Activated CD8-positive, alpha-beta T cell treated with anti-CD3 and anti-CD28 coated beads for 36 hours (primary cell): ENCODE measurements at regions of chr12 and their contacts with region 1.

Region 1: DNA sequence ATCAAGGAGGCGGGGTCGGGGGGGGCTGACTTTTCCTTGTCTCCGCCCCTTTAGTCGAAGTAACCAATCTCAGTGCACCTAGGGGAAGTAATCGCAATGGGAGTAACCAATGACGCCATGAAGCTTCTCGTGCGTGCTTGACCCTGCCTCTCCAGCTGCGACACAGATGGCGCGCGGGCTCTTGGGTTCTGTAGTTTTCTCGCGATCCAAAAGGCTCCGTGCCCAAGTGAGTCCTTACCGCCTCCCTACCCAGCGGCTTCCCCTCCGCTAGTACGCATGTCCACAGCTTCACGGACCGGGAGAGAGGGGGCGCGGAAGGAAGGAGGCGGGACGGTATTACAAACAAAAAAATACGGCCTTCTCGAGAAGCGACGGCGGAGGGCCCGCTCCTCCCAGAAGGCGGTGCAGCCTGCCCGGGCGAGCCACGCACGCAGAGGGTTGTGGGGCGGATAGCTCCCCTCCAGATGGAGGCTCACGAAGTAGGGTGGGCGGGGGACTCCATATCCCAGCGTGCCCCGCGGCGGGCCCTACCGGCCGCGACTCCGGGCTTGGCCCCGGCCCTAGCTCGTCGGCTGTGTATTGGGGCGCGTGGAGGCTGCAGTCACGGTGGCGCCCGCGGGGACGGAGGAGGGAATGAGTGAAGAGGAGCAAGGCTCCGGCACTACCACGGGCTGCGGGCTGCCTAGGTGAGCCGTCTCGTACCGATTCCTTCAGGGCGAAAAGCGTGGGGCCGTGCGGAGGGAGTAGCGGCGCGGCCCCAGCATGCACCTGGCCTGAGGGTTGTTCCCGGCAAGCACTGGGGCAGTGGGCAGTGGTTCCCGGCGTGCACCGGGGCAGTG is at the start of gene TARBP2:
- DNase-seq: peak; percentile 98
- ATAC-seq: peak; percentile 81
- H3K4me3 Mint-ChIP-seq: peak within 1 kb of the TSS; percentile 76
- H3K27ac Mint-ChIP-seq: peak within 1 kb of the TSS; percentile 94
- H3K4me1 Mint-ChIP-seq: peaks cover 39% of the 10 kb centered on the region
- H3K27me3 Mint-ChIP-seq: no peaks in the 10 kb centered on the region
- CTCF ChIP-seq: no peak
- total RNA-seq, gene TARBP2: 32.0 to 33.3 TPM

Region 2: DNA sequence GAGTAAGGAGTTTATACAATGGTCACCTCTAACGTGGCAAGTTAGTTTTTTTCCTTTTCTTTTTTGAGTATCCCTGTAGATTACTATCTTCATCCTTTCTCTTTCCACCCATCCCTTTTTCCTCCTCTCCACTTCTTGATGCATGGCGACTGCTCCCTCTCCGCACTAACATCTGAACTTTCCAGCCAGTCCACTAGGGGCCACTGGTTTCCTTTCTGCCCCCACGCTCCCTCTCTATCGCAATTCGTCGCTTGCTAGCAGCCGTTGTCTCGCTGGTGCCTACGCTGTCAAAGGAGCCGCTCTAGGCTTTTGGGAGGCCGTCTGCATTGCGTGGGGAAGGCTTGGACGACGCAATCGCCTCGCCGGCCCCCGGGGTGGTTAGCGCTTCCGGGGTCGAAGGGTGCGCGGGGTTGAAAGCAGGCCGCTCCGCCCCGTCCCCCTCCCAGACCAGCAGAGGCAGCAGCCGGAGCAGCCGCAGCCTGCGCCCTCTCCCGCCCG is 49.3 kb before region 1 on chr12 and contains the start of gene PCBP2:
- CTCF ChIA-PET with region 1: no interaction called
- POLR2A ChIA-PET with region 1: interaction called, 1,494 read pairs
- intact Hi-C with region 1: no loop called
- DNase-seq: peak; percentile 98
- ATAC-seq: peak; percentile 94
- H3K4me3 Mint-ChIP-seq: peak within 1 kb of the TSS; percentile 91
- H3K27ac Mint-ChIP-seq: peak within 1 kb of the TSS; percentile 99
- H3K4me1 Mint-ChIP-seq: peaks cover 38% of the 10 kb centered on the region
- H3K27me3 Mint-ChIP-seq: no peaks in the 10 kb centered on the region
- CTCF ChIP-seq: peak; percentile 86
- total RNA-seq, gene PCBP2: 958 to 973 TPM